Sciatic nerve (tissue), 2 donors: ENCODE measurements at regions of chr16 and their contacts with region 1.

Region 1: GRCh38 chr16:28553776-28554633 is at the start of gene SGF29:
- DNase-seq: peak; percentile 97
- ATAC-seq: peak; percentile 97
- total RNA-seq, gene SGF29: 30.9 TPM

Region 2: DNA sequence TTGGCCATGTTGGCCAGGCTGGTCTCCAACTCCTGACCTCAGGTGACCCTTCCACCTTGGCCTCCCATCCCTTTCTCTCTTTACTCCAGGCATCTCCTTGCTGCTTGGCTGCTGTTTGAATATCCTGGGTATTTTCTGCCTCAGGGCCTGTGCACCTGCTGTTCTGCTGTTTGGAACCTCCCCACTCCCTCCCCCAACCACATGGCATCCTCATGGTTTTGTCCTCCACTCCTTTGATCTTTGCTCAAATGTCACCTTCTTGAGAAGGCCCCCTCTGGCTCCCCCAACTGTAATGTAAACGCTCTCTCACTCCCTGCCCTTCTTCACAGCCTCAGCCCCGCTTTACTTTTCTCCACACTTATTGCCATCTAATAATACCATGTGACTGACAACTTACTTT is 642.5 kb before region 1 on chr16:
- intact Hi-C with region 1: no loop called
- DNase-seq: no peak
- ATAC-seq: no peak

Region 3: GRCh38 chr16:28902909-28903308 is 348.9 kb after region 1 on chr16:
- intact Hi-C with region 1: loop called (anchors 5 kb)
- DNase-seq: no peak
- ATAC-seq: peak; percentile 13

Region 4: DNA sequence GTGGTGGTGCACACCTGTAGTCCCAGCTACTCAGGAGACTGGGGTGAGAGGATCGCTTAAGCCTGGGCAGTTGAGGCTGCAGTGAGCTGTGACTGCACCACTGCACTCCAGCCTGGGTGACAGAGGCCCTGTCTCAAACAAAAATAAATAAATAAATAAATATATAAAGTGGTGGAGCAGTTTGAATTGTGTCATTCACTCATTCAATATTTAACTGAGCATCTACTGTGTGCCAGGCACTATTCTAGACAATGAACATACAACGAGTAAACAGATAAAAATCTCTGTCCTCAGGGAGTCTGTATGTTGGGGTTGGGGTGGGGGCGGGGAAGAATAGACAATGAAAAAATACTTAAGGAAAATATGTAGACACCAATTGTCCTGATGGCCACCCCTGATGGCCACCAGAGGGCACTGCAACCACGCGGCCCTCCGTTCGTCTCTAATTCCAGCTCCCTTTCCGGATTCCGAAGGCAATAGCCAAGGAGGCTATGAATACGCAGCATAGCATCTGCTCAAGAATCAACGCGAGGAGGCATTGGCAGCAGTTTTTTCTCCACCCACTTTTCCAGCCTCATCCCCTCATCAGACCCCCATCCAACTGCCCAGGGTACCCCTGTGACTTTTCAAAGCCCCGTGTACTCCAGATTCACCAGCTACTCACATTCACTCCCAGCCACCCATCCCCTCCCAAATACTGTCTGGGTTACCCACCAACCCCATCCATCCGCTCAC is 1146.4 kb after region 1 on chr16:
- intact Hi-C with region 1: loop called (anchors 5 kb)
- DNase-seq: peak; percentile 75
- ATAC-seq: peak; percentile 87